Heart left ventricle (tissue), 16 donors: ENCODE measurements at regions of chr14 and their contacts with region 1.

Region 1: DNA sequence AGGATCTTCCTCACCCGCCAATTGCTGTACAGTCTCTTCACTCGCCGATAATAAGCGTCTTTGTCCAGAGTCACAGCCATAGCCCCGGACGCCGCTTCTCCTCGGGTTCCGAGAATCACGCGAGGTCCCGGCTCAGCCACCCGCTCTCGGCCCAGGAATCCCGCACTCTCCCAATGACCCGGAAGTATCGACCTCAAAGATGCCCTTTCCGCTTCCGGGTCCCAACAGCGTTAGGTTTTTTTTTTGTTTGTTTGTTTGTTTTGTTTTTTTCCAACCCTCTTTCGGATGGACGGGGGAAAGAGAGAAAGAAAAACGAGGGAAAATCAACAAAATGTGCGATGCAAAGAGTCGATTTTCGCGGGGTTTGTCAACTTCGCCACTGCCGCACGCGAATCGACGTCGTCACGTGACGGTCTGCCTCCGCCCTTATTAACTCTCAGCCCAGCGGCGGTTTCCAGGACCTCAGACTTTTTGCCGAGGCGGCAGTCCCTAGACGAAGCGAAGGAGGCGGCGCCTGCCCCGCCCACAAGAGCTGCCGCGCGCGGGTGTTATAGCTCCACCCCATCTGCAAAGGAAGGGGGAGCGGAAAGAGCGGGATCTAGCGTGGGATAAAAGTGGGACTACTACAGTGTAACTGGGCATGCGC is at the start of gene SUPT16H:
- DNase-seq: peak; percentile 95 to 98 (median 97)
- ATAC-seq: peak; percentile 98 to 99 (median 98)
- H3K4me3 ChIP-seq: peak within 1 kb of the TSS; percentile 63 to 97 (median 71)
- H3K27ac ChIP-seq: peak within 1 kb of the TSS; percentile 29 to 97 (median 90)
- H3K4me1 ChIP-seq: peaks cover 0 to 48% (median 29%) of the 10 kb centered on the region in 12 donors
- H3K27me3 ChIP-seq: no peaks in the 10 kb centered on the region
- CTCF ChIP-seq: peak in 1 of 12 donors; percentile 12
- POLR2A ChIP-seq: no peak
- total RNA-seq, gene SUPT16H: 25.1 to 38.1 (median 29.6) TPM

Region 2: DNA sequence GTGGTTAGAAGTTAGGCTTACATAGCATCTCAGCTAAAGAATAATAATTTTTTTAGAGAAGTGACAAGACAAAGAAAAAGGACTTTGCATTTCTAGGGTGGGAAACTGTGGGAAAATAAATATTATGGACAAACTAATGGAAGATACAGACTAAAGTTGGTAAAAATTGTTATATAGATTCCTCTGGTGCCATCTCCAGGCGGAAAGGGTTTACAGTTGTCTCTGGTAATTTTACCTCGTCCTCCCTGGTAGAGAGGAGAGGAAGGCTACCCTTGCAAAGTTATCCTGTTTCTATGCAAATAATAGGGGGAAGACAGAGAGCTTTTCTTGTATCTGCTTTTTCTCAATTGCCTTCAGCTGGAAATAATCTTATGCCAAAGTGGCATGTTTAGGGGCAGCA is 1188.1 kb before region 1 on chr14:
- intact Hi-C with region 1: no loop called
- DNase-seq: no peak
- ATAC-seq: no peak
- H3K4me3 ChIP-seq: no peak overlapping the region
- H3K27ac ChIP-seq: no peak overlapping the region
- H3K4me1 ChIP-seq: no peaks in the 10 kb centered on the region
- H3K27me3 ChIP-seq: peaks cover 0 to 5% (median 0%) of the 10 kb centered on the region in 9 donors
- CTCF ChIP-seq: no peak
- POLR2A ChIP-seq: no peak

Region 3: GRCh38 chr14:21233457-21234076 is 150.4 kb before region 1 on chr14:
- intact Hi-C with region 1: loop called in 4 of 10 experiments (anchors 10 kb)
- DNase-seq: no peak
- ATAC-seq: peak in 3 of 4 donors; percentile 38 to 55 (median 53)
- H3K4me3 ChIP-seq: no peak overlapping the region
- H3K27ac ChIP-seq: no peak overlapping the region
- H3K4me1 ChIP-seq: peaks cover 0 to 97% (median 63%) of the 10 kb centered on the region in 12 donors
- H3K27me3 ChIP-seq: no peaks in the 10 kb centered on the region
- CTCF ChIP-seq: peak in 9 of 12 donors; percentile 28 to 51 (median 36)
- POLR2A ChIP-seq: no peak

Region 4: DNA sequence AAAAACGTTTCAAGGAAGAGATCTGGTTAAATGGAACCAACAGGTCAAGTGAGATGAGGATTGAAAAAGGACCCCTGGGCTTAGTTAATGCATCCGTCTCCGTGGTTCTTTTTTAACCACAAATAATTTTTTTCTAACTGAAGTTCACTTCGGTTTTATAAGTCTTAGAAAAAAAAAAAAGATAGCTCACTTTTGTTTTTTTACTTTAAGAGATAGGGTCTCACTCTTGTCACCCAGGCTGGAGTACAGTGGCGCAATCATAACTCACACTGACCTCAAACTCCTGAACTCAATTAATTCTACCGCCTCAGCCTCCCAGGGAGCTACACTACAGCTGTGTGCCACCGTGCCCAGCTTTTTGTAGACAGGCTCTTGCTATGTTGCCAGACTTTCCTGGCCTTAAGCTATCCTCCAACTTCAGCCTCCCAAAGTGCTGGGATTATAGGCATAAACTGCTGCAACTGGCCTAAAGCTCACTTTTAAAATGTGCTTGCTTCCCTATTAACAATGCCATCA is 126.5 kb before region 1 on chr14:
- intact Hi-C with region 1: loop called in 4 of 10 experiments (anchors 10 kb)
- DNase-seq: no peak
- ATAC-seq: peak in 2 of 4 donors; percentile 19 to 35
- H3K4me3 ChIP-seq: no peak overlapping the region
- H3K27ac ChIP-seq: no peak overlapping the region
- H3K4me1 ChIP-seq: peaks cover 4 to 87% (median 66%) of the 10 kb centered on the region in 12 donors
- H3K27me3 ChIP-seq: no peaks in the 10 kb centered on the region
- CTCF ChIP-seq: no peak
- POLR2A ChIP-seq: no peak

Region 5: DNA sequence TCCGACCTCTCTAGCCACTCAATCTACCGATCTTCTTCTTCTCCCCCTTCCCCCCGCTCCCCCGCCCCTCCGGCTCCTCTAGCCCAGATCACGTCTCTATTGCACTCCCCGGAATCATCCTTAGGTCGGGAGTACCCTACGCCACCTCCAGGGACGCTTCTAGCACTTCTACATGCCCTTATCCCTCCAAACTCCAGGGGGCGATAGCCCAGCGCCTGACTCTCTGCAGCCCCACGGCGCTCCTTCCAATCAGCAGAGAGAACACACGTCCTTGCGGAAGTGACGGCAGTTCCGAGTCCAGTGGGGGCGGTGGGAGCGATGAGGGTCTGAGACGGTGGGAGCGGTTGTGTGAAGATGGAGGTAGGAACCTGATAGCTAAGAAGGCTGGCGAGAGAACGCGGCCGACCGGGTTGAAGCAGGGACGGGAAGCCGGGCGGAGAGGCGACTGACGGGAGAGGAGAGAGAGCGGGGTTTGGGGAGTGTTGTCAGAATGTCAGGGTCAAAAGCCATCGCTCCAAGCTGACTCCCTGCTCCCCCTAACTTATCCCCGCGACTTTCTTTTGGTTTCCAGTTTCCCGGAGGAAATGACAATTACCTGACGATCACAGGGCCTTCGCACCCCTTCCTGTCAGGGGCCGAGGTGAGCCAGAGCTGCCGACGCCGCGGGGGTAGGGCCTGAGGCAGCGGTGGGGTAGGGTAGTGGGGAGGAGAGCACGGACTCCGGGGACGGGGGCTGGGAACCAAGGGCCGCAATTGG is 93.1 kb after region 1 on chr14 and contains the starts of genes RAB2B and TOX4:
- intact Hi-C with region 1: loop called in 1 of 10 experiments (anchors 5 kb)
- DNase-seq: peak; percentile 95 to 97 (median 97)
- ATAC-seq: peak; percentile 99 to 100 (median 100)
- H3K4me3 ChIP-seq: peak within 1 kb of the TSS; percentile 59 to 98 (median 84)
- H3K27ac ChIP-seq: peak within 1 kb of the TSS; percentile 14 to 90 (median 84)
- H3K4me1 ChIP-seq: peaks cover 7 to 36% (median 19%) of the 10 kb centered on the region in 12 donors
- H3K27me3 ChIP-seq: no peaks in the 10 kb centered on the region
- CTCF ChIP-seq: peak; percentile 86 to 99 (median 94)
- POLR2A ChIP-seq: peak in 1 of 2 donors; percentile 77
- total RNA-seq, gene RAB2B: 13.3 to 24.5 (median 17.2) TPM
- total RNA-seq, gene TOX4: 51.1 to 100 (median 87.4) TPM

Region 6: DNA sequence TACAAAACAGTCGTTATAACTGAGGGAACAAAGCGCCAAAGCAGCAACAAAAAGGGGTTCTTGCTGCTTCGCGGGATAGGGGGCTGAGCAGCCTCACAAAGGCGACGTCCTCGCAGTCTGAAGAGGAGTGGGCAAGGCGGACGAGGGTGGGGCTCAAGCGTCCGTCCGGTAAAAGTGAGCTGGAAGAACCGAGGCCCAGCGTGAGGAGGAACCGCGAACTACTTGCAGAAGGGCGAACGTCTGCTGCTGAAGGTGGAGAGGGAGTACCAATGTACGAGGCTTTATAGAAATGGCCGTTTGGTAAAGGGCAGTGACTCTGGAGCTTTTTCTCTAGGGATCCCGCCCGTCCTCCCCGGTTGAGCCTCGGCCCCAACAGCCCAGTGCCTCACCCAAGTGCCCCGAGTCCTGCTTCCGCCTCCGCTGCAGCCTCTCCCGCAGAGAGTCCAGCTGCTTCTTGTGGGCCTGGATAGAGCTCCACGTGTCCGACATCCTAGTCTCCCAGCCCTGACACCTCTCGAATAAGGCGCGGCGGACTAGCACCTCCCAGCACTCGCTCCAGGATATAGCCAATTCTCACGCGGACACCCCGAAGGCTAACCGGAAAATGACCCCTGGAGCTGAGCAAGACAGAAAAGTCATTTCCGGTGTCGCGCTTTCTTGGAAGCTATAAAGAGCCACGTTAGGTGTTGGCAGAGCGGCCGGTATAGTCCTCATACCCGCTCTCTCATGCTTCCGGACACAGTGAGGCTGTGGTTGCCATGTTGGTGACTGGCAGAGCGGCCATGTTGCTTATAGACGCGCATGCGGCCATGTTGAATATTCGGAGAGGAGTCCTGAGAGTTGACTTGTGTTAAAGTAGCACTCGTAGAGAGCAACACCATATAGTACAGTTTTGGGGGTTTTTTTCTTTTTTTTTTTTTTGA is 127.0 kb after region 1 on chr14 and contains the start of gene METTL3:
- intact Hi-C with region 1: loop called in 1 of 10 experiments (anchors 2 kb)
- DNase-seq: peak; percentile 96 to 99 (median 98)
- ATAC-seq: peak; percentile 99 to 100 (median 100)
- H3K4me3 ChIP-seq: peak within 1 kb of the TSS; percentile 64 to 94 (median 82)
- H3K27ac ChIP-seq: peak within 1 kb of the TSS; percentile 55 to 92 (median 82)
- H3K4me1 ChIP-seq: peaks cover 0 to 28% (median 13%) of the 10 kb centered on the region in 12 donors
- H3K27me3 ChIP-seq: no peaks in the 10 kb centered on the region
- CTCF ChIP-seq: peak in 1 of 12 donors; percentile 7
- POLR2A ChIP-seq: no peak
- total RNA-seq, gene METTL3: 21.0 to 37.0 (median 25.2) TPM